ENCODE measurements at regions of chr11 and their contacts with region 1.

Region 1: GRCh38 chr11:91802475-91802874 is 422.1 kb upstream of the FAT3 start:
- DNase-seq: no peak
- H3K4me3 ChIP-seq: no peak overlapping the region
- H3K4me3 Mint-ChIP-seq: no peak overlapping the region
- H3K27ac Mint-ChIP-seq: no peak overlapping the region
- H3K4me1 ChIP-seq: peaks cover 27% of the 10 kb centered on the region
- H3K4me1 Mint-ChIP-seq: peaks cover 22% of the 10 kb centered on the region
- H3K27me3 ChIP-seq: no peaks in the 10 kb centered on the region
- H3K27me3 Mint-ChIP-seq: no peaks in the 10 kb centered on the region
- CTCF ChIP-seq: no peak

Region 2: DNA sequence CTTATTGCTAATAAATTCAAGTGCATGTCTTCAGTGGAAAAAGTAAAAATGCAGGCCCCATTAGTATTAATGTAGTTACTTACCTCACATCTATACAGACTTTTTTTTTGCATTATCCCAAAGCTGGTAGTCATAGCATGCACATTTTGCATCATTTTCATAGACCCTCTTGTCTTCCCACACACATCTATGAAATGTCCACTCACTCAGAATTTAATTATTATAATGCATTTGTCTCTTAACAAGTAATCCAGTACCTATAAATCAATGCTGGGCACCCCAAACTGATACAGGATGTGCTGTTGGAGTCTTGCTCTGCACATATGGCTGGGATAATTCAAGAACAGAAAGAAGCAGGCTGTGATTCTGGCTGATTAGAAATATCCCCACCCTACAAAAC is 51.7 kb after region 1 on chr11:
- CTCF ChIA-PET with region 1: interaction called, 11 read pairs
- POLR2A ChIA-PET with region 1: no interaction called
- intact Hi-C with region 1: no loop called
- DNase-seq: no peak
- H3K4me3 ChIP-seq: no peak overlapping the region
- H3K4me3 Mint-ChIP-seq: no peak overlapping the region
- H3K27ac Mint-ChIP-seq: no peak overlapping the region
- H3K4me1 ChIP-seq: no peaks in the 10 kb centered on the region
- H3K4me1 Mint-ChIP-seq: no peaks in the 10 kb centered on the region
- H3K27me3 ChIP-seq: no peaks in the 10 kb centered on the region
- H3K27me3 Mint-ChIP-seq: peaks cover 4% of the 10 kb centered on the region
- CTCF ChIP-seq: no peak

Measured in Caco-2 (cell line).